Naive thymus-derived CD8-positive, alpha-beta T cell (primary cell): ENCODE measurements at regions of chr22 and their contacts with region 1.

Region 1: GRCh38 chr22:39240828-39241793 is 3.7 kb downstream of the PDGFB start:
- DNase-seq: peak in 8 of 10 donors; percentile 25 to 73 (median 35)
- ATAC-seq: peak; percentile 16 to 18
- H3K4me3 Mint-ChIP-seq: peak overlapping the region; percentile 82 to 93 (median 92)
- H3K27ac Mint-ChIP-seq: peak overlapping the region; percentile 88 to 97 (median 92)
- H3K4me1 Mint-ChIP-seq: peaks cover 44 to 78% (median 67%) of the 10 kb centered on the region in 4 donors
- H3K27me3 Mint-ChIP-seq: peaks cover 0 to 20% (median 11%) of the 10 kb centered on the region in 5 donors

Region 2: DNA sequence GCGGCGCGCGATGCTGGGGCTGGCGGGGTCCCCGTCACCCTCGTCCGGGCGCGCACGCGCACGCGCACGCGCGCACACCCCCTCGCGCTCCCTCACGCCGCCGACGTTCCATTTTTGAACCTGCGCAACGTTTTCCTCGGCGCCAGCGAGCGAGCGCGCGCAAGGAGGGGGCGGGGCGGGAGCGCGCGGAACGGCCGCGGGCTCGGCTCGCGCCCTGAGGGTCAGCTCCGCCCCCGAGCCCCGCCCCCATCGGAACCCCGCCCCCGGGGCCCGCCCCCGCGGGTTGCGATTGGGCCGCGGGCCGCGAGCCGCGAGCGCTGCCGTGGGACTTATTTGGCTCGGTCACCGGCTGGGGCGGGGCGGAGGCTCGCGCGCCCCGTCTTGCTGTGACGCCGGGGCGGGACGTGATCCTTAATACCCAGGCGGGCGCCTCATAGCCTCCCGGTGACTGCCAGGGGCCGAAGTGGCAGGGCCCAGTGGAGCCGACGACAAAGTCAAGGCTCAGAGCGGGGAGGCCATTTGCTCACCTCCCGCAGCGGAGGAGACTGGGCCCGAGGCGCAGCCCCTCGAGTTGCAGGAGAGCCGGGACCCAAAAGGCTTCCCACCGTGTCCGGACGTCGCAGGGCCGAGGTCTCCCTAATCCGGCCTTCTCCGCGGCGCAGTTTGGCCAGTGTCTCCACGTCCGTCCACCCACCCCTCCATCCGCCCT is 88.4 kb before region 1 on chr22 and contains the start of gene CBX7:
- POLR2A ChIA-PET with region 1: interaction called, 35 read pairs
- DNase-seq: peak; percentile 87 to 96 (median 94)
- ATAC-seq: peak; percentile 84 to 89
- H3K4me3 Mint-ChIP-seq: peak within 1 kb of the TSS; percentile 85 to 97 (median 90)
- H3K27ac Mint-ChIP-seq: peak within 1 kb of the TSS; percentile 90 to 98 (median 92)
- H3K4me1 Mint-ChIP-seq: peaks cover 23 to 43% (median 39%) of the 10 kb centered on the region in 4 donors
- H3K27me3 Mint-ChIP-seq: peaks cover 0 to 4% (median 2%) of the 10 kb centered on the region in 5 donors
- polyA plus RNA-seq, gene CBX7: 19.1 to 23.1 (median 19.5) TPM

Region 3: DNA sequence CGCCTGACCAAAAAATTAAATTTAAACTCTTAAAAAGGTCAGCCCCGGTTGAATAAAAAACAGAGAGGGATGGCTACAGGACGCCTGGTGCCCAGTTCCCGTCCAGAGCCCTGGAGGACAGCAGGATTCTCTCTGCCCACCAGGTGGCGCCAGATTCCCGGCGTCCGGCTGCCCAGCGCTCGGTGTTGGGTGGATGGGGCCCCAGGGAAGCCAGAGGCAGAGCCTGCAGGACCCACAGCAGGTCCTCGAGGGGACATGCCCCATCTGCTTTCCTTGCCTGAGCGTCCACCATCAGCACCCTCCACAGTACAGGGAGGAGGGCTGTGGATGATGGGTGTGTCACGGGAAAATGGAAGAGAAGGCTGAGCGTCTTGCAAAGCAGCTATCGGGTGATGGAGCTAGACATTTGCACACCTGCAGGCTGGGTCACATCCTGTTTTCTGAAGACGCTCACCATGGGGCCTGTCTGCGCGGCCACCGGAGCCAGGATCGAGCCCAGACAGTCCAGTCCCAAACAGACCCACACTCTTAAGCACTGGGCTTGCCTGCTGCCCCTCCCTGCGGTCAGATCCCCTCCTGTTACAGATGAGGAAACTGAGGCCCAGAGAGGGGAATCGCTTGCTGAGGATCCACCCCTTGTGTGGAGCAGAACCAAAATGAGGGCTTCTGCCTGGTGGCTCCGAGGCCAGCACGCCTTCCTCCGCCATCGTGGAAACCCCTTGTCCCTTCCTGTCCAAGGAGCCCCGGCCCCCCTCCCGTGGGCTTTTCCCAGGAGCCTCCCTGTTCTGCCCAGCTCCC is 70.1 kb before region 1 on chr22:
- POLR2A ChIA-PET with region 1: interaction called, 68 read pairs
- DNase-seq: peak; percentile 64 to 92 (median 84)
- ATAC-seq: peak; percentile 66 to 68
- H3K4me3 Mint-ChIP-seq: peak overlapping the region; percentile 53 to 83 (median 76)
- H3K27ac Mint-ChIP-seq: peak overlapping the region; percentile 91 to 99 (median 96)
- H3K4me1 Mint-ChIP-seq: peaks cover 33 to 50% (median 47%) of the 10 kb centered on the region in 4 donors
- H3K27me3 Mint-ChIP-seq: no peaks in the 10 kb centered on the region

Region 4: GRCh38 chr22:39223201-39223641 is 17.9 kb before region 1 on chr22:
- POLR2A ChIA-PET with region 1: interaction called, 10 read pairs
- DNase-seq: peak in 5 of 10 donors; percentile 37 to 74 (median 45)
- ATAC-seq: peak; percentile 53 to 77
- H3K4me3 Mint-ChIP-seq: no peak overlapping the region
- H3K27ac Mint-ChIP-seq: peak overlapping the region in 8 of 10 donors; percentile 12 to 84 (median 46)
- H3K4me1 Mint-ChIP-seq: peaks cover 5 to 8% (median 6%) of the 10 kb centered on the region in 4 donors
- H3K27me3 Mint-ChIP-seq: peaks cover 0 to 25% (median 13%) of the 10 kb centered on the region in 5 donors

Region 5: GRCh38 chr22:39253435-39254070 is 12.4 kb after region 1 on chr22:
- POLR2A ChIA-PET with region 1: interaction called, 12 read pairs
- DNase-seq: no peak
- ATAC-seq: peak; percentile 29 to 67
- H3K4me3 Mint-ChIP-seq: peak overlapping the region in 1 of 10 donors; percentile 6
- H3K27ac Mint-ChIP-seq: peak overlapping the region in 1 of 10 donors; percentile 53
- H3K4me1 Mint-ChIP-seq: peaks cover 19 to 29% (median 19%) of the 10 kb centered on the region in 4 donors
- H3K27me3 Mint-ChIP-seq: peaks cover 12 to 57% (median 19%) of the 10 kb centered on the region in 5 donors